ENCODE measurements at regions of chr6 and their contacts with region 1.

Region 1: DNA sequence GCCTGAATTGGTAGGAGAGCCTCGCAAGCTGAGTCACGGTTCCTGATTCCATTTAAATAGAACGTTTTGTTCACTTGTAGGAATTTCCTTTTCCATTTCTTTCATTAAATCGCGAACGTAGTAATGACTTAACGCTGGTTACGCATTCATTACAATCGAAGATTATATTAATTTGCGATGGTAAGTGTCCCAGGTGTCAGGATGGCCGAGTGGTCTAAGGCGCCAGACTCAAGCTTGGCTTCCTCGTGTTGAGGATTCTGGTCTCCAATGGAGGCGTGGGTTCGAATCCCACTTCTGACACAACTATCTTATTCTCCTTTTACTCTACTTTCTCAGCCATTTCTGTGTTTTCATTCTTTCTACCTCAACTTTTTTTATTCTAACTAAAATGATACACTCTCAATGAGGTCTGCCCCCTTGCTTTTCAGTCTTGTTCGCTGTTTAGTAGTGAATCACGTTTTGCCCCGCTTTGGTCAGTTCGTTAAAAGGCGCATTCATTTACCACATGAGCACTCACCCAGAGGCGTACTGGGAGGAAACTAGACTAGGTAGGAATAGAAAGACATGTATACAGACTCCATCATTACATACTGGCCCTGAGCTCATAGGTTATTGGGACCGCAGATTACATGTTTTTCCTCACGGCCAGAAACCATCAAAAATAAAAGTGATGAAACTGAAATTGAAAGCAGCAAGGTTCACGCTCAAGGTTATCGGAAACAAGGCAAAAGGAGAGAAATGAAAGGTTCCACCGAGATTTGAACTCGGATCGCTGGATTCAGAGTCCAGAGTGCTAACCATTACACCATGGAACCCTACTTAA is 17.3 kb upstream of the TRIM27 start:
- DNase-seq: peak; percentile 76 to 85
- ATAC-seq: peak; percentile 91
- H3K4me3 ChIP-seq: peak overlapping the region; percentile 49 to 63
- H3K27ac ChIP-seq: peak overlapping the region; percentile 57 to 65
- H3K4me1 ChIP-seq: no peaks in the 10 kb centered on the region
- H3K27me3 ChIP-seq: no peaks in the 10 kb centered on the region

Region 2: DNA sequence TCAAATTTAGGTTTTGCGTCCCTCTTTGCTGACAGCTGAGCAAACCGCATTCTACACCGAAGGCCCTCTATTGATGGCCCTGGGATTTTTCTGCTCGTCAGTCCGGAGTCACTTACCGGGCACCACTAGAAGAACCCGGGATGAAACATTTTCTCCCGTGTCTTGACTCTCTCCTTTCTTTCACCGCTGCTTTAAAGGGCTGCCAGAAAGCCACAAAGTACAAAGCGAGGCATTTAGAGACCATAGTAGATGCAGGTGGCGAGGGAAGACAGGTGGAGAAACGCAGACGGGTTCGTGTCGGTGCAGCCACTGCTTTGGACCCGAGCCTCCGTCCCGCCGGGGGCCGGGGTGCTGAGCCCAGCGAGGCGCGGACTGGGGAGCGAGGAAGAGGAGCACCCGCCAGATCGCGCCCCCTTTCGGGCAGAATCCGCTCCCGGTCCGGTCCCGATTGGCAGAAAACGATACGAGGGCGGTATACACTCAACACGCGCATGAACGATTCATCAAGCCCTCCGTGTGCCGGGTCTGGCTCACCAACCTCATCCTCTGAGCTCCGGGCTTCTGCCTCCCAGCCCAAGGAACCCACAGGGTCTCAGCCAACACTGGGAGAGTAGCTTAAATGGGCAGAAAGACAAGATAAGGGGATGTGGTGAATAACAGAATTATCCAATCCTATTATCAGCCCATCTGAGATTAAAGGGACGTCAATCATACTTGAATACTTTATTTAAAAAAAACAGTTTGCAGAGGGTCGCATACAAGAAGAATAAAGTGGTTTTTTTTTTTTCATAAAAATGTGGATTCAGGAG is 102.2 kb before region 1 on chr6:
- intact Hi-C with region 1: loop called in 1 of 2 experiments (anchors 2 kb)
- DNase-seq: peak; percentile 87 to 94
- ATAC-seq: peak; percentile 93
- H3K4me3 ChIP-seq: peak overlapping the region; percentile 54 to 61
- H3K27ac ChIP-seq: no peak overlapping the region
- H3K4me1 ChIP-seq: no peaks in the 10 kb centered on the region
- H3K27me3 ChIP-seq: no peaks in the 10 kb centered on the region

Region 3: GRCh38 chr6:28863604-28864320 is 77.3 kb before region 1 on chr6:
- intact Hi-C with region 1: loop called in 1 of 2 experiments (anchors 2 kb)
- DNase-seq: peak; percentile 67 to 84
- ATAC-seq: peak; percentile 91
- H3K4me3 ChIP-seq: peak overlapping the region; percentile 60 to 67
- H3K27ac ChIP-seq: peak overlapping the region in 1 of 2 donors; percentile 13
- H3K4me1 ChIP-seq: no peaks in the 10 kb centered on the region
- H3K27me3 ChIP-seq: no peaks in the 10 kb centered on the region

Region 4: GRCh38 chr6:28880894-28881780 is 59.9 kb before region 1 on chr6:
- intact Hi-C with region 1: loop called (anchors 5 kb)
- DNase-seq: peak; percentile 76 to 88
- ATAC-seq: peak; percentile 89
- H3K4me3 ChIP-seq: peak overlapping the region; percentile 77 to 95
- H3K27ac ChIP-seq: peak overlapping the region in 1 of 2 donors; percentile 39
- H3K4me1 ChIP-seq: peaks cover 0 to 3% of the 10 kb centered on the region in 2 donors
- H3K27me3 ChIP-seq: no peaks in the 10 kb centered on the region

Region 5: GRCh38 chr6:28895134-28895812 is 45.8 kb before region 1 on chr6:
- intact Hi-C with region 1: loop called (anchors 2 kb)
- DNase-seq: peak; percentile 94 to 96
- ATAC-seq: peak; percentile 96
- H3K4me3 ChIP-seq: peak overlapping the region; percentile 52 to 96
- H3K27ac ChIP-seq: peak overlapping the region; percentile 9 to 95
- H3K4me1 ChIP-seq: no peaks in the 10 kb centered on the region
- H3K27me3 ChIP-seq: no peaks in the 10 kb centered on the region

Region 6: GRCh38 chr6:28981833-28982475 is 40.9 kb after region 1 on chr6:
- intact Hi-C with region 1: loop called (anchors 2 kb)
- DNase-seq: peak; percentile 85 to 90
- ATAC-seq: peak; percentile 94
- H3K4me3 ChIP-seq: peak overlapping the region; percentile 57 to 95
- H3K27ac ChIP-seq: no peak overlapping the region
- H3K4me1 ChIP-seq: peaks cover 0 to 2% of the 10 kb centered on the region in 2 donors
- H3K27me3 ChIP-seq: no peaks in the 10 kb centered on the region

Region 7: DNA sequence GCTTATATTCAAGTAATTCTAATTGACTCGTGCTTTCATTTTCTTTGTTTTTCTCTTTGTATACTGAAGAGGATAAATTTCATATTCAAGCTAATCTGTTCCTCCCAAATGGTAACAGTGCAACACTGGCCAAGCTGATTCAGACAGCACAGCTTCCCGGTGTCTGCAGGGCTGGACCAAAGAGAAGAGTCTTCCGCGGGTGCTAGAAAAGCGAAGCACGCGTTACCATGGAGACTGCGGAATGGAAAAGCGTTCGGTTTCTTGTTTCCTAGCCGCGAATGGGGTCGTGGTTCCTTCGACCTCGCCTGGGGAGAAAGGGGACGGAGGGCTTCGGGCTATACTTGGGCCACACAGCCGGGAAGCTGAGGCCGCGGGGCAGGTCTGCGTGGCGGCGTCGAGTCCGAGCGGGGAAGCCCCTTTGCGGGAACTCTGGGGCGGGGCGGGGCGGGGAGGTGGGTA is 70.2 kb after region 1 on chr6:
- intact Hi-C with region 1: loop called in 1 of 2 experiments (anchors 5 kb)
- DNase-seq: peak; percentile 59 to 79
- ATAC-seq: peak; percentile 63
- H3K4me3 ChIP-seq: peak overlapping the region; percentile 54 to 65
- H3K27ac ChIP-seq: no peak overlapping the region
- H3K4me1 ChIP-seq: no peaks in the 10 kb centered on the region
- H3K27me3 ChIP-seq: no peaks in the 10 kb centered on the region

Region 8: GRCh38 chr6:29021434-29021833 is 80.4 kb after region 1 on chr6:
- intact Hi-C with region 1: no loop called
- DNase-seq: no peak
- ATAC-seq: no peak
- H3K4me3 ChIP-seq: no peak overlapping the region
- H3K27ac ChIP-seq: no peak overlapping the region
- H3K4me1 ChIP-seq: no peaks in the 10 kb centered on the region
- H3K27me3 ChIP-seq: no peaks in the 10 kb centered on the region

Region 9: GRCh38 chr6:29097803-29098202 is 156.7 kb after region 1 on chr6:
- intact Hi-C with region 1: no loop called
- DNase-seq: no peak
- ATAC-seq: no peak
- H3K4me3 ChIP-seq: no peak overlapping the region
- H3K27ac ChIP-seq: no peak overlapping the region
- H3K4me1 ChIP-seq: no peaks in the 10 kb centered on the region
- H3K27me3 ChIP-seq: no peaks in the 10 kb centered on the region